ENCODE measurements at regions of chr17 and their contacts with region 1.

Region 1: DNA sequence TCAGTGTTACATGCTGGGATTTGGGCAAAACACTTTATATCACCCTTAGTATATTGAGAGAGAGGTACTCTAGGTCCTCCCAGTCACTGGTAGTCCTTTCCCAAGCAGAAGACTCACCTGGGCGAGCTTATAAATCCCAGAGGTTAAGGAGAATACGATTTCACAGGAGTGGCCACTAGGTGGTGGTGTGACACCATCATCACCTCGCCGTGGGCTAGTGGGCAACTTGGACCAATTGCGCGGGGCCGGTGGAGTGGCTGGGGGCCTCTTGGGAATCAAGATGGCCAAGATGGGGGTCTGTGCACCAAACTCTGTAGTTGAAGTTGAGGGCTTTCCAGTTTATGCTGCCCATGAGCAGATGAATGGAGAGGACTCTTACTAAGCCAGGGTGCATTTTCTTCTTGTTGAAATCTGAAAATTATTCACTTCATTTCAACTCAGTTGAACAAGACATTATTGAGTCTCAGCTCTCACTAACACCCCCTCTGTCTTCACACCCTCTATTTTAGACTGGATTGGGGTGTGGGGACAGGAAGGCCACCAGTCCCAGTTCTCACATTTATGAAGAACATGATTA is 38.2 kb upstream of the PIRT start:
- DNase-seq: peak; percentile 36
- ATAC-seq: peak; percentile 89
- H3K4me3 ChIP-seq: no peak overlapping the region
- H3K27ac ChIP-seq: no peak overlapping the region
- H3K4me1 ChIP-seq: no peaks in the 10 kb centered on the region
- H3K27me3 ChIP-seq: peaks cover 5% of the 10 kb centered on the region; the same call in 1 of the 2 replicates
- CTCF ChIP-seq: peak; percentile 43 to 75 (median 49); a peak in 5 of 6 replicates
- POLR2A ChIP-seq: no peak
- RAD21 ChIP-seq: peak; percentile 74

Region 2: GRCh38 chr17:10527419-10527818 is 348.6 kb before region 1 on chr17:
- CTCF ChIA-PET with region 1: no interaction called
- POLR2A ChIA-PET with region 1: no interaction called
- RAD21 ChIA-PET with region 1: no interaction called
- intact Hi-C with region 1: no loop called
- DNase-seq: no peak
- ATAC-seq: no peak
- H3K4me3 ChIP-seq: no peak overlapping the region
- H3K27ac ChIP-seq: no peak overlapping the region
- H3K4me1 ChIP-seq: no peaks in the 10 kb centered on the region
- H3K27me3 ChIP-seq: peaks cover 4% of the 10 kb centered on the region
- CTCF ChIP-seq: no peak
- POLR2A ChIP-seq: no peak
- RAD21 ChIP-seq: no peak

Region 3: DNA sequence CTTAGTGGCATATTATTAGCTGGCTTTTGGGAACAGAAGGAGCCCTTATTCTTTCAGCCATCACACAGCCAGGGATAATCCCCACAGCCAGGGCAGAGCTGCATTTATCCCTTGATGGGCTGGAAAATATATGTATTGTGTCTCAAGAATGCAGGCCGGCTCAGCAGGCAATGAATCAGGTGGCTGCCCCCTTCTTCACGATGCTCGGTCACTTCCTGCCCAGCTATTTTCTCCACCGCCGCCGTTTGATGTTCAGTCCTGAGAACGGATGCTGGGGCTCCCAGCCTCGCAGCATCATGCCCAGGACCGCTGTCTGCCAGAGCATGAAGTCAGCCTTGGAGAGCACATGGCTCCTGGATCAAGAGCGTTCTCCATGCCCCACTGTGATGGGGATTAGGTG is 214.6 kb before region 1 on chr17:
- CTCF ChIA-PET with region 1: no interaction called
- POLR2A ChIA-PET with region 1: no interaction called
- RAD21 ChIA-PET with region 1: no interaction called
- intact Hi-C with region 1: no loop called
- DNase-seq: no peak
- ATAC-seq: no peak
- H3K4me3 ChIP-seq: no peak overlapping the region
- H3K27ac ChIP-seq: no peak overlapping the region
- H3K4me1 ChIP-seq: no peaks in the 10 kb centered on the region
- H3K27me3 ChIP-seq: no peaks in the 10 kb centered on the region
- CTCF ChIP-seq: no peak
- POLR2A ChIP-seq: no peak
- RAD21 ChIP-seq: no peak

Region 4: DNA sequence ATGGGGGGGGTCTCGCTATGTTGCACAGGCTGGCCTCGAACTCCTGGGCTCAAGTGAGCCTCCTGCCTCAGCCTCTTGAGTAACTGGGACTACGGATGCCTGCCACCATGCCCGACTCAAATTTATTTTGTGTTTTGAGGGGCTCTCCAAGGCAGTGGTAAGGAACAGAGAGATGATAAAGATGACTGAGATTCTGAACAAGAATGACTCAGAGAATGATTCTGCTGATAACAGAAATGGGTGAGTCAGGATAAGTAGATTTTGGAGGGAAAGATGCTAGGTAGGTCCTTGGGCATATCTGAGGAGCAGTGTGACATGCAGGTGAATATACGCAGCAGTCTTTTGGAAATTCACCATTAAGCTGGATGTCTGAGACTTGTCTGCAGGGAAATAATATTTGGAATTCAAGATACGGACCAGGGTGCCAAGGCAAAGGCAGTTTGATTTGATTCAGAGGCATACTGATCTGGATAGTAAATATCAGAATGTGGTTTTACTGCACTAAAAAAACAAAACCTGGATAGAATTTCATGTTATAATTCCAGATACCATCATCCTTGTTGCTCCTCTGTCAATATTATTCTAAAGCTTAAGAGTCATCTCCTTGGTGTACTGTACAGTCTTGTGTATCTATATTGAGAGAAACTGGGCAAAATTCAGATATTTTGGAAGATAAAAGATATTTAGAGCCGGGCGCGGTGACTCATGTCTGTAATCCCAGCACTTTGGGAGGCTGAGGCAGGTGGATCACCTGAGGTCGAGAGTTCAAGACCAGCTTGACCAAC is 148.7 kb before region 1 on chr17:
- CTCF ChIA-PET with region 1: no interaction called
- POLR2A ChIA-PET with region 1: no interaction called
- RAD21 ChIA-PET with region 1: no interaction called
- intact Hi-C with region 1: no loop called
- DNase-seq: no peak
- ATAC-seq: no peak
- H3K4me3 ChIP-seq: no peak overlapping the region
- H3K27ac ChIP-seq: no peak overlapping the region
- H3K4me1 ChIP-seq: no peaks in the 10 kb centered on the region
- H3K27me3 ChIP-seq: no peaks in the 10 kb centered on the region
- CTCF ChIP-seq: no peak
- POLR2A ChIP-seq: no peak
- RAD21 ChIP-seq: no peak

Region 5: DNA sequence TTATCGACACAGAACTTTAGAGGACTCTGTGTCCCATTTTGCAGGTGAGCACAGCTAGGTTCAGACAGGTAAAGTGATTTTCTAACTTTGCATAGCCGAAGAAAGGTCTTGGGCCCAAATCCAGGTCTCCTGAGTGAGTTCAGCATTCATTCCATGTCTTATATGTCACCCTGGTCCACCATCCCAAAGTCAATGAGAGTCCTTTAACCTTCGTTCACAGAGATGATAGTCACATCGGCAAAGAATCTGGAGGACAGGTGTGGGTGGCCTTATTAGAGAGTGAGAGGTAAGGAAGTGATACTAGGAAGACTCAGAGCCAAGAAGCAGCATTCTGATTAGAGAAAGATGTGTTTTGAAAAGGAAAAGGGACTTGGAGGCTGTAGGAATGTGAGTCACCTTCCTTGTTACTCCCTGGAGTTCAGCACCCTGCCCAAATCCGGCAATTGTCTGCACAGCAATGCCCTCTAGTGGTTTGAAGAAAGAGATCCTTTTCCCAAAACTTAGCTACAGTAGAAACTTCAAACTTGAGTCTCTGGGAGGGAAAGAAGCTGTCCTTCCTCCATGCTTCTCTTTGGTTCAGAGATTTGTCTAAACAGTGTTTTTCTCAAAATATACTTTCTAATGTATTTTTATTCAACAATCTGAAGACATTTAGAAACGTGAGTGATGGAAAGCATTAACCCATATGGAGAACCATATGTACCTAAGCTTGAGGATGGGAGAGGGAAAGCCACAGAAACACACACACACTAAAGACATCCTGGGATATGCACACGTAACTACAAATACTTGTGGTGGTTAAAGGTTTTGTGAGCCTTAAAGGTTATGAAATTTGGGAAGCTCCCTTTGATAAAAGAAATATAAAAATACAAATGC is 268.5 kb after region 1 on chr17:
- CTCF ChIA-PET with region 1: interaction called, 13 read pairs
- POLR2A ChIA-PET with region 1: no interaction called
- RAD21 ChIA-PET with region 1: interaction called in 1 of 2 experiments, 3 read pairs
- intact Hi-C with region 1: loop called (anchors 5 kb)
- DNase-seq: no peak
- ATAC-seq: no peak
- H3K4me3 ChIP-seq: no peak overlapping the region
- H3K27ac ChIP-seq: no peak overlapping the region
- H3K4me1 ChIP-seq: no peaks in the 10 kb centered on the region
- H3K27me3 ChIP-seq: no peaks in the 10 kb centered on the region
- CTCF ChIP-seq: peak; percentile 7 to 44 (median 42); a peak in 3 of 6 replicates
- POLR2A ChIP-seq: no peak
- RAD21 ChIP-seq: 0 out of 2 replicates have a peak, but pooled peaks have one; percentile 28

Region 6: DNA sequence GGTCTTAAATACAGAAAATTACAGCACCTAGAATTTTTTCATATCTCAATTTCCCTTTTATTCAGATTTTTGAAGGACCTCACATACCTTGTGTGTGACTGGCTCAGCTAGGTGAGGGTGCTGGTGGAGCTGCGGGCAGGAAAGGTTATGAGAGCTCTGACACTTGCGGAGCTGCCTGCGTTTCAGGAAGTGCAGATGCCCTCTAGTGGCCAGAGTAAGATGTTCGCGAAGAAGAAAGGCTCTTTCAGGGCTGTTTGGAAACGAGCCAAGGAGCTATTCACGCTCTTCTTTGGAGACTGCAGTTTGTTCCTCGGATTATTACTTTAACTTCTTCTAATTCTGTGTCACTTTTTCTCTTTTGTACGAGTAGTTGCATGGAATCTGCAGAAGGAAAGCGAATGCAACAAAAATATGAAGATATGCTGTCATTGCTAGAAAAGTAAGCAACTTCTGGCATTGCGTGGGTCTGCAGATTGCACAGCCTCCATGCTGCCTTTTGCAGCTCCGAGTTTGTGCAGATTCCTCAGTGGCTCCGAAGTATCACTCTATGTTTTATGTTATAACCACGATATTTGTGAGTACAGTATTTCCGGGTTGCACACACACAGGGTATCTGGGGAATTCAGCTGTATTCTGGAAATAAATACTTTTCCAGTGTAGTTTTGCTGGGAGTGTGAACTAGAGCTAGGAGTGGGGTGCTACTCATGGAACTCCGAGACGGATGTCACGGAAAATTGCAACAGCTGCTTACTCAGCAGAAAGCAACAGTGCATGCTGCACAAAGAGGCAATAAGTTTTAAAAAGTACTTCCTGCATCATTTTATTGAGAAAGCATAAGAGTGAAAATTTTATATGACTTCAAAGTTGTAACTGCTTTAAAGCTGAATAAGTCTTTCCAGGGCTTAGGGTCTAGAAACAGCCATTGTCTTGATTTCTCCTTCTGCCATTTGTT is 768.5 kb after region 1 on chr17:
- CTCF ChIA-PET with region 1: interaction called, 9 read pairs
- POLR2A ChIA-PET with region 1: no interaction called
- RAD21 ChIA-PET with region 1: no interaction called
- intact Hi-C with region 1: loop called (anchors 1 kb)
- DNase-seq: peak; percentile 60
- ATAC-seq: peak; percentile 79
- H3K4me3 ChIP-seq: no peak overlapping the region
- H3K27ac ChIP-seq: no peak overlapping the region
- H3K4me1 ChIP-seq: no peaks in the 10 kb centered on the region
- H3K27me3 ChIP-seq: no peaks in the 10 kb centered on the region
- CTCF ChIP-seq: peak; percentile 24 to 84 (median 80); a peak in 5 of 6 replicates
- POLR2A ChIP-seq: no peak
- RAD21 ChIP-seq: peak; percentile 47

Region 7: GRCh38 chr17:11986942-11987329 is 1110.9 kb after region 1 on chr17:
- CTCF ChIA-PET with region 1: interaction called, 5 read pairs
- POLR2A ChIA-PET with region 1: no interaction called
- RAD21 ChIA-PET with region 1: interaction called in 1 of 2 experiments, 3 read pairs
- intact Hi-C with region 1: loop called (anchors 1 kb)
- DNase-seq: peak; percentile 32
- ATAC-seq: peak; percentile 77
- H3K4me3 ChIP-seq: no peak overlapping the region
- H3K27ac ChIP-seq: no peak overlapping the region
- H3K4me1 ChIP-seq: no peaks in the 10 kb centered on the region
- H3K27me3 ChIP-seq: no peaks in the 10 kb centered on the region
- CTCF ChIP-seq: peak; percentile 37 to 62 (median 42); a peak in 5 of 6 replicates
- POLR2A ChIP-seq: no peak
- RAD21 ChIP-seq: peak; percentile 61

Measured in HCT116 (cell line).